Endothelial cell of umbilical vein (primary cell): ENCODE measurements at regions of chr5 and their contacts with region 1.

Region 1: GRCh38 chr5:82387001-82387818 is 109.1 kb upstream of the RPS23 start:
- DNase-seq: peak; percentile 99
- H3K4me3 ChIP-seq: no peak overlapping the region
- H3K27ac ChIP-seq: peak overlapping the region; percentile 59
- H3K4me1 ChIP-seq: peaks cover 39% of the 10 kb centered on the region
- H3K27me3 ChIP-seq: no peaks in the 10 kb centered on the region
- CTCF ChIP-seq: no peak
- POLR2A ChIP-seq: no peak

Region 2: DNA sequence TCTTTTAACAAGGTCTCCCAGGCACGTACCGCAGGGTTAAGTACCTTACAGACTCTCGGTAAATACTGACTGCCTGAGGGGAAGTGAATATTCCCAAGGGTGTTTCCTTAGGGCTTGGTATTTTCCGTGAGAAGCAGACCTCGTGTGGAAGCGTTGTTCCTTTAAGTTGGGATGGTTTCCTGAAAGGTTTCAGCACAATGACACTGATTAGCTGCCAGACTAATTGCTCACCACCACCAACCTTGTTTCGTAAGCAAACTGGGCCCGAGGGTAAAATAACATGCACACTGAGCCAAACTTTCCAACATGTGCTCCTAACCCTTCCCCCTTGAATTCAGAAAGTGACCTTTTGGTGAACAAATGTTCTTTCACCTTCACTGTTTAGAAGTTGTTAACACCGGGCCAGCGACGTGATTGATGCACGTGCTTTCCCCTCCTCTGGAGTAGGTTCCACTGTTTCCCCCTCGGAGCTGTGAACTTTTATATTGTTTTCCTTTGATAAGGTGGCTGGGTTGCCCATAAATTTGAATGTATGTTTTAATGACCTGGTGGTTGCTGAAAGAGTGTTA is 19.1 kb after region 1 on chr5:
- CTCF ChIA-PET with region 1: interaction called, 5 read pairs
- POLR2A ChIA-PET with region 1: interaction called, 3 read pairs
- dilution Hi-C with region 1: no loop called
- intact Hi-C with region 1: loop called (anchors 1 kb)
- DNase-seq: peak; percentile 100
- H3K4me3 ChIP-seq: peak overlapping the region in 1 of 3 experiments; percentile 1
- H3K27ac ChIP-seq: peak overlapping the region; percentile 99
- H3K4me1 ChIP-seq: peaks cover 28% of the 10 kb centered on the region
- H3K27me3 ChIP-seq: no peaks in the 10 kb centered on the region
- CTCF ChIP-seq: no peak
- POLR2A ChIP-seq: peak; percentile 65

Region 3: GRCh38 chr5:82421119-82421518 is 33.9 kb after region 1 on chr5:
- CTCF ChIA-PET with region 1: interaction called, 8 read pairs
- POLR2A ChIA-PET with region 1: interaction called, 3 read pairs
- dilution Hi-C with region 1: no loop called
- intact Hi-C with region 1: loop called (anchors 1 kb)
- DNase-seq: peak; percentile 89
- H3K4me3 ChIP-seq: no peak overlapping the region
- H3K27ac ChIP-seq: no peak overlapping the region
- H3K4me1 ChIP-seq: peaks cover 11% of the 10 kb centered on the region
- H3K27me3 ChIP-seq: no peaks in the 10 kb centered on the region
- CTCF ChIP-seq: peak in 1 of 2 donors; percentile 10
- POLR2A ChIP-seq: no peak

Region 4: GRCh38 chr5:82445726-82446335 is 58.6 kb after region 1 on chr5:
- CTCF ChIA-PET with region 1: no interaction called
- POLR2A ChIA-PET with region 1: no interaction called
- dilution Hi-C with region 1: no loop called
- intact Hi-C with region 1: no loop called
- DNase-seq: no peak
- H3K4me3 ChIP-seq: no peak overlapping the region
- H3K27ac ChIP-seq: no peak overlapping the region
- H3K4me1 ChIP-seq: no peaks in the 10 kb centered on the region
- H3K27me3 ChIP-seq: peaks cover 0 to 13% of the 10 kb centered on the region in 2 experiments
- CTCF ChIP-seq: no peak
- POLR2A ChIP-seq: no peak

Region 5: GRCh38 chr5:82635561-82636288 is 248.5 kb after region 1 on chr5:
- CTCF ChIA-PET with region 1: no interaction called
- POLR2A ChIA-PET with region 1: no interaction called
- dilution Hi-C with region 1: no loop called
- intact Hi-C with region 1: loop called (anchors 1 kb)
- DNase-seq: peak; percentile 44
- H3K4me3 ChIP-seq: no peak overlapping the region
- H3K27ac ChIP-seq: no peak overlapping the region
- H3K4me1 ChIP-seq: peaks cover 5% of the 10 kb centered on the region
- H3K27me3 ChIP-seq: no peaks in the 10 kb centered on the region
- CTCF ChIP-seq: no peak
- POLR2A ChIP-seq: no peak